GM13976 (cell line): ENCODE measurements at regions of chr19 and their contacts with region 1.

Region 1: DNA sequence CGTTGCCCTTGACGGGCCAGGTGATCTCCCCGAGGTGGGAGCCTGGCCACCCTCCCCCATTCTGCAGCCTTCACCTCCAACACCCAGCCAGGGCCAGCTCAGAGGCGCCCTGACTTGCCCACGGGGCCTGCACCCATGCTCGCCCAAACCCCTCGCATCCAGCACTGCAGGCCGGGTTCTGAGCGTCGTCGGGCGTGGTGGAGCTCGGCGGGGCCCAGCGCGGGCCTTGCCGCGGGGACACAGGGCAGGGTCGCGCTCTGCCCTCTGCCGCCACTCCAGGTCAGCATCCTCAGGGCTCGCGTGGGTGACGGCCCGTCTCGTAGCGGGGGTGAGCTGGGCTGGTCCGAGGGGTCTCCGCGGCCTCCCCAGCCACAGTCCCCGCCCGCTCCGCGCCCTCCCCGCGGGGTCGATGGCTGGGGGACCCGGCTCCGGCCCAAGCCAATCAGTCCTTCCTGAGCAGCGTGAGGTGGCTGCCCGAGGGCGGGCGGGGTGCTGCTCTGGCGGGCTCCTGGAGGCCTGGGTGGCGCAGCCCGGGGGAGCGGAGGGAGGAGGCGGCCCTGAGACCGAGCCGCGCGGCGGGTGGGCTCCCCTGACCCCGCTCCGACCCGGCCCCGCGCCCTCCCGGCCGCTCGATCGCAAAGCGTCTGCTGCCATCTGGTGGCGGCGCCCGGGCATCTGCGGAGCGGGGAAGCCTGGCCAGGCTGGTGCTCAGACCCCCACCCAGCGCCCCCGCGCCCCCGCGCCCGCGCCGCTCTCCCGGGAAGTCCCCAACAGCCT is 61.4 kb downstream of the CCNE1 start:
- DNase-seq: peak; percentile 88
- CTCF ChIP-seq: peak; percentile 91

Region 2: GRCh38 chr19:29735800-29736199 is 137.4 kb before region 1 on chr19:
- in situ Hi-C with region 1: loop called (anchors 10 kb)
- DNase-seq: no peak
- CTCF ChIP-seq: no peak

Region 3: GRCh38 chr19:29988351-29988750 is 115.1 kb after region 1 on chr19:
- in situ Hi-C with region 1: no loop called
- DNase-seq: no peak
- CTCF ChIP-seq: no peak

Region 4: GRCh38 chr19:30649934-30650614 is 776.9 kb after region 1 on chr19:
- in situ Hi-C with region 1: loop called (anchors 25 kb)
- DNase-seq: peak; percentile 74
- CTCF ChIP-seq: peak; percentile 66